K562 (cell line): ENCODE measurements at regions of chrX and their contacts with region 1.

Region 1: GRCh38 chrX:11137543-11138139 is 26.5 kb downstream of the HCCS start:
- DNase-seq: peak in 1 of 4 experiments; percentile 46
- ATAC-seq: no peak
- H3K4me3 ChIP-seq: no peak overlapping the region
- H3K27ac ChIP-seq: no peak overlapping the region
- H3K4me1 ChIP-seq: peaks cover 0 to 14% of the 10 kb centered on the region in 2 experiments; a peak in 2 of 5 replicates
- H3K27me3 ChIP-seq: no peaks in the 10 kb centered on the region
- CTCF ChIP-seq: peak in 2 of 3 experiments; percentile 24 to 62; a peak in 4 of 6 replicates
- EP300 ChIP-seq: no peak
- POLR2A ChIP-seq: no peak
- RAD21 ChIP-seq: peak; percentile 40; a peak in 3 of 4 replicates

Region 2: DNA sequence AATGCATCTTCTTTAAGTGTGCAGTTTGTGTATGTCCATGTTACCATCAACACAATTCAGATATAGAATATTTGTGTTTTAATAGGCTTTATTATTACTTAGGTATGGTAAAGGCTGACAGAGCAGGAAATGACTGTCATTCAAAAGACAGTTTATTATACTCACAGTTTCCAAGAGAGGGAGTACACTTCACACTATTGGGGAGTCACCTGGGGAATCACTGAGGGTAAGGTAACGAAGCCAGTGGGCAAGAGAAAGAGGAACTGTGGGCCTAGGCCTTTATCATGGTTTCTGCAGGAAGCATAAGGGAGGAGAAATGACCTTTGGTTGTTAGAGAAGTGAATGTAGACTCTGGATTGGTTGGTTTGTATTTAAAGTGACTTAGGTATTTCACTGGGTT is 261.6 kb before region 1 on chrX:
- CTCF ChIA-PET with region 1: interaction called, 3 read pairs
- POLR2A ChIA-PET with region 1: no interaction called
- in situ Hi-C with region 1: no loop called
- intact Hi-C with region 1: loop called (anchors 10 kb)
- DNase-seq: no peak
- ATAC-seq: no peak; the same call in 2 of the 3 replicates
- H3K4me3 ChIP-seq: no peak overlapping the region
- H3K27ac ChIP-seq: no peak overlapping the region
- H3K4me1 ChIP-seq: no peaks in the 10 kb centered on the region
- H3K27me3 ChIP-seq: no peaks in the 10 kb centered on the region
- CTCF ChIP-seq: no peak
- EP300 ChIP-seq: no peak
- POLR2A ChIP-seq: no peak
- RAD21 ChIP-seq: no peak